ENCODE measurements at regions of chr4 and their contacts with region 1.

Region 1: DNA sequence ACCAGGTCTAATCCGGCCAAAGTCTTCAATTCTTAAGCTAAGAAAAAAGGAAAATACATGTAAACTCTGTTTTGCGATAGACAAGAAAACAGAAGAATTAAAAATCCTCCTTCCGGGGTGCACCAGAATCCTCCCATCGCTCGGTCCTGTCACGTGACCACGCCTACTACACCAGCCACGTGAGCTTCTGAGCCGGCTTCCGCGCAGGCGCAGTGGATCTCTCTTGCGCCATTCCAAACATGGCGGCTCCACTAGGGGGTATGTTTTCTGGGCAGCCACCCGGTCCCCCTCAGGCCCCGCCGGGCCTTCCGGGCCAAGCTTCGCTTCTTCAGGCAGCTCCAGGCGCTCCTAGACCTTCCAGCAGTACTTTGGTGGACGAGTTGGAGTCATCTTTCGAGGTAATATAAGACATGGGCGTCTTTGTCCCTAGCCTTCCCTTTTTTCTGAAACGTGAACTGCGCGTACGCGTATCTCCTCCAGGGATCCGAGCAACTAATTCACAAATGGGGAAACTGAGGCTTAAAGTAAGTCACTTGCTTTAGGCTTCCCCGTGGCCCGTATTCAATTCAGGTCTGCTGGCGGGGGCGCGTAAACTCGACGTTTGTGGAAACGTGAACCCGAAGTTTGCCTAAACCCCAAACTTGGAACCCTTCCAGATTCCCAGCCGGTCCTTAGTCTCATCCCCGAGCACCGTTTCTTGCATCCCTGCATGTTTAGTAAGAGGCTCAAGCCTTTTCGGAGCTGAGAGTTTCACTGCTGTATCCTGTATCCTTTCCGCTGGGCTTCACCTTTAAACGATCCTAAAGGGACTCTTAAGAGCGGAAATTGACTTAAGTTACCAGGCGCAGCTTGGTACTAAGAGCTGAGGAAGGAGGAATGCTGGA is at the start of gene MED28:
- DNase-seq: peak; percentile 83 to 93
- H3K4me3 ChIP-seq: peak within 1 kb of the TSS; percentile 81 to 100 (median 100)
- H3K27ac ChIP-seq: peak within 1 kb of the TSS; percentile 95
- H3K4me1 ChIP-seq: peaks cover 0 to 4% (median 0%) of the 10 kb centered on the region in 4 experiments; a peak in 1 of 7 replicates
- H3K27me3 ChIP-seq: no peaks in the 10 kb centered on the region
- CTCF ChIP-seq: no peak
- EP300 ChIP-seq: no peak
- POLR2A ChIP-seq: peak; percentile 89 to 90
- RAD21 ChIP-seq: no peak; a peak in 1 of 4 replicates
- total RNA-seq, gene MED28: 87.1 and 101 TPM in 2 replicates

Region 2: DNA sequence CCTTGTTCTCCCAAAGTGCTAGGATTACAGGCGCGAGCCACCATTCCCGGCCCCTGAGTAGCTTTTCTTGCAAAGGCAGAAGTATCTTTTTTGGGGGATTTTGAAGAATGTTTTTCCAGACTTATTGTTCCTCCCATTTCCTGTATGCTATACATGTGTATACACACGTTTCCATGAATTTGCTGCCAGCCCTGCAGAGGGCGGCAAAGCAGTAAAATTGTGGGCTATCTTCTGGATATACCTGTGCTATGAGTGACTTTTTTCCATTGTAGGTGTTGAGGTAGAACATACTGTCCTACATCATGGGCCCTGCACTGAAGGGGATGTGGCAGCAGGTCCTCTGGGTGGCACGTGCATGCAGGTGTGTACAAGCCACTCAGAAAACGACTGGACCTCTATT is 17.1 kb before region 1 on chr4:
- CTCF ChIA-PET with region 1: interaction called, 3 read pairs
- POLR2A ChIA-PET with region 1: interaction called, 14 read pairs
- DNase-seq: no peak
- H3K4me3 ChIP-seq: no peak overlapping the region
- H3K27ac ChIP-seq: no peak overlapping the region
- H3K4me1 ChIP-seq: no peaks in the 10 kb centered on the region
- H3K27me3 ChIP-seq: no peaks in the 10 kb centered on the region
- CTCF ChIP-seq: peak in 2 of 3 experiments; percentile 26 to 43; a peak in 2 of 4 replicates
- EP300 ChIP-seq: no peak
- POLR2A ChIP-seq: no peak
- RAD21 ChIP-seq: peak; percentile 33 to 56; a peak in 3 of 4 replicates

Region 3: GRCh38 chr4:17708992-17709762 is 94.5 kb after region 1 on chr4:
- CTCF ChIA-PET with region 1: no interaction called
- POLR2A ChIA-PET with region 1: no interaction called
- DNase-seq: peak in 1 of 2 experiments; percentile 45
- H3K4me3 ChIP-seq: no peak overlapping the region
- H3K27ac ChIP-seq: no peak overlapping the region
- H3K4me1 ChIP-seq: no peaks in the 10 kb centered on the region
- H3K27me3 ChIP-seq: no peaks in the 10 kb centered on the region
- CTCF ChIP-seq: no peak
- EP300 ChIP-seq: no peak
- POLR2A ChIP-seq: no peak
- RAD21 ChIP-seq: no peak